Activated T-helper 2 cell treated with anti-CD3 and anti-CD28 coated beads, Interferon-gamma antibody, Interleukin-2, Interleukin-4, amounts not matched to agents 10 μg/mL and 5 μg/mL and 100 μg/mL, durations not matched to agents 14 hours and 24 hours and 36 hours (primary cell): ENCODE measurements at regions of chr5 and their contacts with region 1.

Region 1: DNA sequence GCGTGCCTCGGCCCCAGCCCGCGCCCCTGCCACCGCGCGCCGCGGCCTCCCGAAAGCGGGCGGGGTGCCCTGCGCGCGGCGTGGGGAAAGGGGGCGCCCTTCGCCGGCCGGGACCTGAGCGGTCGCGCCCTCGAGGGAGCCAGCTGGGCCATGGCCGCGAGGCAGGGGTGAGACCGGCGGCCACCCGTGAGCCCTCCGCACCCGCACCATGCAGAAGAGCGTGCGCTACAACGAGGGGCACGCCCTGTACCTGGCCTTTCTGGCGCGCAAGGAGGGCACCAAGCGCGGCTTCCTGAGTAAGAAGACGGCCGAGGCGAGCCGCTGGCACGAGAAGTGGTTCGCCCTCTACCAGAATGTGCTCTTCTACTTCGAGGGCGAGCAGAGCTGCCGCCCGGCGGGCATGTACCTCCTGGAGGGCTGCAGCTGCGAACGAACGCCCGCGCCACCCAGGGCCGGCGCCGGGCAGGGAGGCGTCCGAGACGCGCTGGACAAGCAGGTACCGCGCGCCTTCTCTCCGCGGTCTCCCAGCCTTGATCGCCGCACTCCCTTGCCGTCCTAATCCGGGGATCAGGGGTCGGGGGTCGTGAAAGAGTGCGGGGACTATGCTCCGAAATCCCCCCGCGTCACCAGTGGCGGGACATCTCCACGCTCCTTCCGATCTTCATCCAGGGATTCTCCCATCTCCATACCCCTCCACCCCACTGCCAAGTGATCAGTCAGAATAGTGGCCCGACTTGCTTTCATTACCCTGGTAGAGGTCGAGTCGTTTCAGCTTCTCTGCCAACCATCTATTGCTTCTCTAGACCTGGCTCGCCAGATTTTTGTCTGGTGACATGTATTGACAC is 590 bp downstream of the RASGRF2 start:
- DNase-seq: peak; percentile 30
- H3K4me3 Mint-ChIP-seq: peak overlapping the region; percentile 89
- H3K27ac Mint-ChIP-seq: peak overlapping the region; percentile 83
- H3K4me1 Mint-ChIP-seq: peaks cover 55% of the 10 kb centered on the region
- H3K27me3 Mint-ChIP-seq: peaks cover 6% of the 10 kb centered on the region

Region 2: DNA sequence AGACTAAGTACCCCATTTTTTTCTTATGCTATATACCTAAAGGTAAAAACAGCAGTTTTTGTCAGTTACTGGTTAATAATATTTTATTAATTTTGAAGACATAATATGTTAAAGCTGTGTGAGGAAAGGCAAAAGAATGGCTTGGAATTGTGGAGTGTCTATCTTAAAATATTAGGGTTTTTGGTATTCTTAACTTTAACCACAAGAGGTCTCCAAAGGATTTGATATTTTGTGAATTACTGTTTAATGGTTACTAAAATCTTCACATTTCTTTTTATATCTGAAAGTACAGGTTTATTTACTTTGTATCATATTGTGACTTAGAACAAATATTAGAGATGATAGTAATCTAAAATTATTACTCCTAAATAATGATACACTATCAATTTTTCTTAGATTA is 274.0 kb before region 1 on chr5:
- intact Hi-C with region 1: loop called (anchors 10 kb)
- DNase-seq: no peak
- H3K4me3 Mint-ChIP-seq: no peak overlapping the region
- H3K27ac Mint-ChIP-seq: no peak overlapping the region
- H3K4me1 Mint-ChIP-seq: peaks cover 27% of the 10 kb centered on the region
- H3K27me3 Mint-ChIP-seq: no peaks in the 10 kb centered on the region

Region 3: GRCh38 chr5:80759866-80760577 is 200.7 kb before region 1 on chr5:
- intact Hi-C with region 1: loop called (anchors 1 kb)
- DNase-seq: no peak
- H3K4me3 Mint-ChIP-seq: peak overlapping the region; percentile 51
- H3K27ac Mint-ChIP-seq: peak overlapping the region; percentile 97
- H3K4me1 Mint-ChIP-seq: peaks cover 62% of the 10 kb centered on the region
- H3K27me3 Mint-ChIP-seq: no peaks in the 10 kb centered on the region

Region 4: GRCh38 chr5:80871541-80871961 is 89.2 kb before region 1 on chr5:
- intact Hi-C with region 1: loop called (anchors 2 kb)
- DNase-seq: no peak
- H3K4me3 Mint-ChIP-seq: no peak overlapping the region
- H3K27ac Mint-ChIP-seq: peak overlapping the region; percentile 89
- H3K4me1 Mint-ChIP-seq: peaks cover 35% of the 10 kb centered on the region
- H3K27me3 Mint-ChIP-seq: no peaks in the 10 kb centered on the region

Region 5: DNA sequence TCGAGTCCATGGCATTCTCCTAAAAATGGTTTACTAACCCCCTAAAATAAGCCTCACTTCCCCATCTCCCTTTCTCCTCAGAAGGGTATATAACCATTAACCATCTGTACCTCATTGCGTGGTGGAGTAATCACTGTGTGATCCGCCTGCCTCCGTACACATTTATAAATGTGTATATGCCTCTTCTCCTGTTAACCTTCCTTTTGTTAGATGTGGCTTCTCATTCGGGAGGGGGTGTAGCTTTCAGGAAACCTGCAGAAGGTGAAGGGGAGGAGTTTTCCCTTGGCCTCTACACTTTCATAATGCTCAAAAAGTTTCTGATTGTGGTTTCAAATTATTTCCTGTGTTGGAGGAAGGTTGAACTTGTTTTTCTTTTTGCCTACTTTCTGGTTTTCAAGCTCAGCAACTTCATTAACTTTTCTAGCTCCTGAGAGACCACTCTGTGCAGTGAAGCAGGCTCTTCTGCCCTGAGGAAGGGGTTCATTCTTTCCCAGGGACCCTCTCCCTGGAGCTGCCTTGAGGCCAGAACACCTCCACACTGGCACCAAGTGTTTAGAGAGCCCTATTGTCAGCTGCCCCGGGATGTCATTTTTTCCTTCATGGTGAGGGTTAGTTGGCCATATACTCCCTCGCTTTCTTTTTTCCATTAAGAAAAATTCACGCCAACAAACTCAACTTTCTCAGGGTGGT is 46.3 kb after region 1 on chr5:
- intact Hi-C with region 1: loop called (anchors 1 kb)
- DNase-seq: peak; percentile 40
- H3K4me3 Mint-ChIP-seq: peak overlapping the region; percentile 73
- H3K27ac Mint-ChIP-seq: peak overlapping the region; percentile 90
- H3K4me1 Mint-ChIP-seq: peaks cover 46% of the 10 kb centered on the region
- H3K27me3 Mint-ChIP-seq: no peaks in the 10 kb centered on the region

Region 6: GRCh38 chr5:81105261-81105877 is 144.6 kb after region 1 on chr5:
- intact Hi-C with region 1: loop called (anchors 2 kb)
- DNase-seq: no peak
- H3K4me3 Mint-ChIP-seq: no peak overlapping the region
- H3K27ac Mint-ChIP-seq: no peak overlapping the region
- H3K4me1 Mint-ChIP-seq: peaks cover 24% of the 10 kb centered on the region
- H3K27me3 Mint-ChIP-seq: no peaks in the 10 kb centered on the region

Region 7: GRCh38 chr5:81183811-81184748 is 223.3 kb after region 1 on chr5:
- intact Hi-C with region 1: loop called (anchors 5 kb)
- DNase-seq: no peak
- H3K4me3 Mint-ChIP-seq: no peak overlapping the region
- H3K27ac Mint-ChIP-seq: no peak overlapping the region
- H3K4me1 Mint-ChIP-seq: peaks cover 34% of the 10 kb centered on the region
- H3K27me3 Mint-ChIP-seq: no peaks in the 10 kb centered on the region